ENCODE measurements at regions of chr1 and their contacts with region 1.

Region 1: GRCh38 chr1:153352523-153352922 is 3.9 kb upstream of the PGLYRP4 start:
- DNase-seq: peak; percentile 70 to 72
- H3K4me3 ChIP-seq: no peak overlapping the region
- H3K4me1 ChIP-seq: no peaks in the 10 kb centered on the region
- H3K27me3 ChIP-seq: peaks cover 16% of the 10 kb centered on the region

Region 2: DNA sequence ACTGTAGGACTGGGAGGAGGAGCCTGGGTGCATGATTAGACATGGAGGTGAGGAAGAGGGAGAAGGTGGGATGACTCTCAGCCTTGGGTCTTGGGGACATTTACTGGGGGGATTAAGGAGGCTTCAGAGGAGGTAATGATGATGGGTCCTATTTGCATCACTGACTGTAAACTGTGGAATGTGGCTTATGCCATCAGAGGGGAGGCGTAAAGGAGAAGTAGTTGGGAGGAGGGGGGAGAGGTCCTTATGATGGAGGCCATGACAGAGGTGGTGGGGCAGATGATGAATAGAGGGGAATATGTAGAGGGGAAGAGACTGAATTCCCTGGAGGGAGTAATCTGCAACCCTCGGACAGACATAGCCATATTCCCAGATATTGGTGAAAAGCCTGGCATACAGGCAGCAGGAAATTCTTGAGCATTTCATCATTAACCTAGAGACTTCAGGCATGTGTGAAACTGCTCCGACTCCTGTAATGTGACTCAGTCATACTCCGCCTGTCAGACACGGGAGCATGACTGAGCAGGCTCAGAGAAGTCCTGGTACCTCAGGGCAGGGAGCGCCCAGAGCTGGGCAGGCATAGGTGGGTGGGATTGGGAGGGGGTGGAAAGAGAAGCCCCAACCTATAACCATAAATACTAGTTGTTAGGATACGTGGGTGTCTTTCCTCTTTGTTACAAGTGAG is 849.9 kb before region 1 on chr1:
- in situ Hi-C with region 1: no loop called
- DNase-seq: no peak
- H3K4me3 ChIP-seq: no peak overlapping the region
- H3K4me1 ChIP-seq: no peaks in the 10 kb centered on the region
- H3K27me3 ChIP-seq: no peaks in the 10 kb centered on the region

Region 3: DNA sequence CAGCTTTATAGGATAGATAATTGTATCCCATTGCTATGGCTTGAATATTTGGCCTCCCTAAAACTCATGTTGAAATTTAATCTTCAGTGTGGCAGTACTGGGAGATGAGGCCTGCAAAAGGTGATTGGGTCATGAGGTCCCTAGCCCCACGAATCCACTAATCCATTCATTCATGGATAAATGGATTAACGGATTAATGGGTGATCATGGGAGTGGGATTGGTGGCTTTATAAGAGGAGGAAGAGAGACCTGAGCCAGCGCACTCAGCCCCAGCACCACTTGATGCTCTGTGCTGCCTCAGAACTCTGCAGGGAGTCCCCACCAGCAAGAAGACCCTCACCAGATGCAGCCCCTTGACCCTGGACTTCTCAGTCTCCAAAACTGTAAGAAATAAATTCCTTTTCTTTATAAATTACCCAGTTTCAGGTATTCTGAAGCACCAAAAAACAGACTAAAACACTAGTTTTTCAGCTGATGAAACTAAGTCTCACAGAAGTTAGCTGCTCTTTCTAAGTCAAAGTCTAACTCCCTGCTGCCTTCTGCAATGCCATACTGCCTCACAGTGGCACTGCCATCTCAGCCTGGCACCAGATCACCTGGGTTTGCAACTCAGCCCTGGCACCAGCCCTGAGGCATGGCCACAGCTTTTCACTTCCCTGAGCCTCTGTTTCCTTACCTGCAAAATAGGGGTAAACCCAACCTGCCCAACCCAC is 151.4 kb after region 1 on chr1:
- in situ Hi-C with region 1: loop called (anchors 5 kb)
- DNase-seq: no peak
- H3K4me3 ChIP-seq: no peak overlapping the region
- H3K4me1 ChIP-seq: no peaks in the 10 kb centered on the region; the same call in 1 of the 2 replicates
- H3K27me3 ChIP-seq: peaks cover 12% of the 10 kb centered on the region

Region 4: DNA sequence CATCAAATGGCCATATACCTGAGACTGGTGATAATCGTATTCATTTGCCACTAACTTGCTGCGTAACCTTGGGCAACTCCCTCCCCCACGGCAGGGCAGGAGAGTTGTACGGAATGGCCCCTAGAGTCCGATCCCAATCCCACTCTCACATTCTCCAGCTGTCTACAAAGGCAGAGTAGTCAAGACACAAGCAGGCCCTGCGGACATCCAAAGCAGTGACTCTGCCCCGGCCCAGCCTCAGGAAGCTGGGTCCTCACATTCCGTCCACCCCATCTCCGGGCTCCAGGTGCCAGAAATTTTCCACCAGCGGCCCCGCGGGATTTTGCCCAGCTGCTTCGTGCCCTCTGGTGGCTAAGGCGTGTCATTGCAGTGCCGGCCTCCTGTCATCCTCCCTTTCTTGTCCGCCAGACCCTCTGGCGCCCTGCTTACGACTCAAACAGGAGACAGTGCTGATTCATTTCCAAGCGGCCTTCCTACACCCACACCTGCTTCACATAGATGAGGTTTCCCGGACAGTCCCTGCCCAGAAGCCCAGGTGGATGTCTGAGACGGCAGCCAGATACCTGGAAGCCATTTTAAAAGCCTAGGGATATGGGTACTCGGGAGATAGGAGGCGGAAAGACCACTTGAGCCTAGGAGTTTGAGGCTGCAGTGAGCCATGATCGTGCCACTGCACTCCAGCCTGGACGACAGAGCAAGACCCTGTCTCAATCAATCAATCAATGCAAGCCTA is 216.0 kb after region 1 on chr1:
- in situ Hi-C with region 1: loop called (anchors 10 kb)
- DNase-seq: peak; percentile 83 to 93
- H3K4me3 ChIP-seq: no peak overlapping the region
- H3K4me1 ChIP-seq: peaks cover 12% of the 10 kb centered on the region
- H3K27me3 ChIP-seq: no peaks in the 10 kb centered on the region

Region 5: GRCh38 chr1:153749408-153750005 is 397.0 kb after region 1 on chr1:
- in situ Hi-C with region 1: loop called (anchors 25 kb)
- DNase-seq: peak; percentile 68 to 79
- H3K4me3 ChIP-seq: no peak overlapping the region
- H3K4me1 ChIP-seq: no peaks in the 10 kb centered on the region
- H3K27me3 ChIP-seq: no peaks in the 10 kb centered on the region